ENCODE measurements at regions of chr7 and their contacts with region 1.

Region 1: DNA sequence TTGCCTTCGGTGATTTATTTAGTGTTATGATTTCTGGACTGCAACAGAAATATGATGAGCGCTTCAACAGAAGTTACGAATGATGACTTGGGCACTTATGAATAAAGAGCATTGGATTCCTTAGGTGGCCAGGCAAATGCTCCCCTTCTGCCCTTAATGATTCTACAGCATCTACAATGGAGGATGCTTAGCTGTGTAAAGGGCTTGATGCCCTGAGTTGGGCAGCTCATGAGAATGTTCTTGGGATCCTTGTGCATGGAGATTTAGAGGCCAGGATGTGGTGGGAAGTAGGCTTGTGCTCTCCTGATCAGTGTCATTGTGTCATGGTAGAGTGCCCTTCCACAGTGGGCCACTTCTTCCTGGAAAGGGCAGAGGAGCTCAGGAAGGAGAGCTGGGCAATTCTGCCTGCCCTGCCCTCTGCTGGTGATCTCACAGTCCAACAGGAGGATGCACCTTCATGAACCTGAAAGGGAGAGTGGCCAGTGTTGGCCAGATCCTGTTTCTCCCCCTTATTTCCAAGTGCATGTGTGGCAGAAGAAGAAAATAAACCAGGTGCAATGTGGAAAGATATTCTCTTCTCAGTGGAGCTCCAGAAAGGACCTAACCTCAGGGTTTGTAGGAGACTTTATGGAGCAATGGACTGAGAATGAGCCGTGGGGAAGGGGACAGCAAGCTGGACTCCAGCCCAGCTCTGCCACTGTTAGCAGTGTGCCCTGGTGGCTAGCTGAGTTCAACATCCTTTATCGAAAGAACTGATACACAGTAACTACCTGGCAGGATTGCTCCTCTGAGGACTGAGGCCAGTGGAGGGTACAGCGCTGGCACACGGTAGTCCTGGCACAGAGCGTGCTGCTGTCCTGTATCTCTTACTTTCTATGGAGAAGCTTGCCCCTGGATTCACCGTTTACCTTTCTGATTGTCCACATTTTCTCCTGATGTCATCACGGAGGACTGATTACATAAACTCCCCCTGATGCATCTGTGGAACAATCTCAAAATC is 182.9 kb downstream of the BMPER start:
- DNase-seq: no peak
- ATAC-seq: peak; percentile 70
- H3K4me3 ChIP-seq: no peak overlapping the region
- H3K27ac ChIP-seq: no peak overlapping the region
- H3K4me1 ChIP-seq: no peaks in the 10 kb centered on the region
- H3K27me3 ChIP-seq: no peaks in the 10 kb centered on the region; a peak in 1 of 4 replicates
- CTCF ChIP-seq: peak in 2 of 3 experiments; percentile 47 to 48; a peak in 4 of 6 replicates
- EP300 ChIP-seq: no peak
- POLR2A ChIP-seq: no peak
- RAD21 ChIP-seq: no peak

Region 2: GRCh38 chr7:33185786-33186185 is 902.4 kb before region 1 on chr7:
- CTCF ChIA-PET with region 1: interaction called, 12 read pairs
- POLR2A ChIA-PET with region 1: no interaction called
- RAD21 ChIA-PET with region 1: no interaction called
- SMC1A ChIA-PET with region 1: interaction called, 3 read pairs
- in situ Hi-C with region 1: no loop called
- intact Hi-C with region 1: no loop called
- DNase-seq: no peak
- ATAC-seq: peak; percentile 84
- H3K4me3 ChIP-seq: no peak overlapping the region
- H3K27ac ChIP-seq: no peak overlapping the region
- H3K4me1 ChIP-seq: no peaks in the 10 kb centered on the region
- H3K27me3 ChIP-seq: no peaks in the 10 kb centered on the region
- CTCF ChIP-seq: peak; percentile 51 to 85 (median 66); a peak in 4 of 6 replicates
- EP300 ChIP-seq: no peak
- POLR2A ChIP-seq: no peak
- RAD21 ChIP-seq: peak; percentile 80

Region 3: DNA sequence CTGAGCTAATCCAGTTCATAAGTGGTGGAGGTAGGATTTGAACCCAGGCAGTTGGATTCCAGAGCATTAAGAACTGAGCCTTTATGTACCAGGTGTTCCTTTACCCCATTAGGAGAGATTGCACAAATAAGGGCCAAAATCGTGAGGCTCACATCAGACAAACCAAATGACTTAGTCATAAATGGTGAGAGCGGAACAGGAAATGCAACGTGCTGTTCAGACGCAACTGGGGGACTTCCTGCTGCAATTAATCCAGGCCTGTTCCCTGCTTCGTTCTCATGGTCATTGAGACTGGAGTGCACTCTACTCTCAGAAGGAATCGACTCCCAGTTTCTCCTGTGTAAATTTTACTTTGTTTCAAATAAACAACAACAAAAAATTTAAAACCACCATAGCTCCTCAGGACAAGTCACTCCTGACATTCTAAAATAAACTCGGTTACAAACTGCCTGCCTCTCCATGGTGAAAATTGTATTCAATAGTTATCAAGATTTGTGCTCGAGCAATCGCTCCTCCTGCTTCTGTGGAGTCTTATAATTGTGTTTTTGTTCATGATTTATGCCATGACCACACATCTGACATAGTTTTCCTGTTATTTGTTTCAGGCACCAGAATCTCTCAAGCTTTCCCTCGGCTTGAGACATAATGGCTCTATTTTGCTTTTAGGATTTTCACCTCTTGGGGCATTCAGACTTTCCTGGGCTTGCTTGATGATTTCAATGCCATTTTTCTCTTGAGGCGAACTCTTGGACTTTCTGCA is 298.1 kb before region 1 on chr7:
- CTCF ChIA-PET with region 1: no interaction called
- POLR2A ChIA-PET with region 1: no interaction called
- RAD21 ChIA-PET with region 1: no interaction called
- SMC1A ChIA-PET with region 1: no interaction called
- in situ Hi-C with region 1: no loop called
- intact Hi-C with region 1: no loop called
- DNase-seq: no peak
- ATAC-seq: no peak
- H3K4me3 ChIP-seq: no peak overlapping the region
- H3K27ac ChIP-seq: no peak overlapping the region
- H3K4me1 ChIP-seq: no peaks in the 10 kb centered on the region
- H3K27me3 ChIP-seq: no peaks in the 10 kb centered on the region; a peak in 1 of 4 replicates
- CTCF ChIP-seq: no peak
- EP300 ChIP-seq: no peak
- POLR2A ChIP-seq: no peak
- RAD21 ChIP-seq: no peak

Region 4: GRCh38 chr7:33854801-33855350 is 233.3 kb before region 1 on chr7:
- CTCF ChIA-PET with region 1: no interaction called
- POLR2A ChIA-PET with region 1: no interaction called
- RAD21 ChIA-PET with region 1: no interaction called
- SMC1A ChIA-PET with region 1: no interaction called
- in situ Hi-C with region 1: no loop called
- intact Hi-C with region 1: no loop called
- DNase-seq: no peak
- ATAC-seq: no peak
- H3K4me3 ChIP-seq: no peak overlapping the region
- H3K27ac ChIP-seq: no peak overlapping the region
- H3K4me1 ChIP-seq: no peaks in the 10 kb centered on the region
- H3K27me3 ChIP-seq: no peaks in the 10 kb centered on the region
- CTCF ChIP-seq: no peak
- EP300 ChIP-seq: no peak
- POLR2A ChIP-seq: no peak
- RAD21 ChIP-seq: no peak